Caco-2 (cell line): ENCODE measurements at regions of chr2 and their contacts with region 1.

Region 1: DNA sequence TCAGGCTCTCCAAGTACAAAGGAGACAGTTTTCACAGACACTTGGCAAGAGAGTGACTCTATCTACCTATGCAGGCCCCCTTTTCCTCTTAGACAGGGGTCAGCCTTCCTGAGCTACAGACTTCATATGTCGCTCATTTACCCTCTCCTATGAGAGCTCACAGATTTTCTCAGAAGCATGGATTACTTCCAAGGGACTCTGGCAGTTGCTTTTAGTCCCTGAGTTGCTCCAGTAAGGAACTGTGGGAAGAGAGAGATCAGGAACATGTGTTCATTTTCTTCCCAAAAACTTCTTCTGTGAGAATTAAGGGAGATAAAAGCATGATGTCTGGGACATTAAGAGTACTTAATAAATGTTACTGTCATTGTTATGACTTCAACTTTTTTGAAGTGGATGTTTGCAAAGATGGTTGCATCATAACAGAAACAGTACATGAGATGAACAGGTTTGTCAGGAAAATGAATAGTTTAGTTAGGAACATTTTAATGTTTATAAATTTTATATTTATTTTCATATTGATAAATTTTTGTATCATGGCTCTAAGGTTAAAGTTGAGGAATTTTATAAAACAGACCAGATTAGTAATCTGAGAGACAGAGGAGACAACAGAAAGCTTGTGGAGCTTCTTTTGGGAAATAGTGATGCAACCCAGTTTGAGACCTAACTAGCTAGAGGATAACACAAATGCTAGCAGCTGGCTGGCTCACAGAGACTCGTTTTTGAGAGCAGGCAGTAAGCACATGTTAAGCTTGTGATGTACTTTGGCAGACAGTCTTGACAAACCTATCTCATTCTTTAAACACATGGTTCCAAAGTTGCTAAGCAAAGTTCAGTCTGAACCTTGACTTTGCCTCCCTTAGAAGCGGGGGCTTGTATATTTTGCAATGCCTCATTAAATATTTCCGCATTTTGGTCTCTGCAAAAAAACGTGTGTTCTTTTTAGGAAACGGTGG is 21.7 kb upstream of the UGP2 start:
- DNase-seq: peak in 1 of 2 experiments; percentile 18
- H3K4me3 ChIP-seq: no peak overlapping the region
- H3K4me3 Mint-ChIP-seq: no peak overlapping the region
- H3K27ac Mint-ChIP-seq: no peak overlapping the region
- H3K4me1 ChIP-seq: peaks cover 8% of the 10 kb centered on the region; the same call in 1 of the 2 replicates
- H3K4me1 Mint-ChIP-seq: peaks cover under 1% of the 10 kb centered on the region
- H3K27me3 ChIP-seq: no peaks in the 10 kb centered on the region
- H3K27me3 Mint-ChIP-seq: no peaks in the 10 kb centered on the region
- CTCF ChIP-seq: no peak

Region 2: DNA sequence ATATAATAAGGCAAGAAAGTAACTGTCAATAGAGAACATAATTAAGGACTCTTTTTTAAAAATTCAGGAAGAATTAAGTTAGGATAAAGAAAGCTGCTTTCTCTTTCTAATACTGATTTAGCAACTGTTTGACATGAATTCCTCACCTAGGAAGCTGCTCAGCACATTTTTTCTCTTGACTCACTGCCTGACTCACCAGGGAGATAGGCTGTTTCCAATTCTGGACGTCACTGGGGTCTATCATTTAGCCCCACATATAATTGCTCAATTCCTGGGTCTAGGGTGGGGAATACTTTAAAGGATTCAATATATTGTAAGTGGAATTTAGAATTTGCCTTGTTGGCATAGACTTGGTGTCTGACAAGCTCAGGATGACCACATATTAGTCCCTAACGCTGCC is 29.1 kb before region 1 on chr2:
- CTCF ChIA-PET with region 1: no interaction called
- POLR2A ChIA-PET with region 1: no interaction called
- intact Hi-C with region 1: loop called (anchors 2 kb)
- DNase-seq: no peak
- H3K4me3 ChIP-seq: no peak overlapping the region
- H3K4me3 Mint-ChIP-seq: no peak overlapping the region
- H3K27ac Mint-ChIP-seq: no peak overlapping the region
- H3K4me1 ChIP-seq: no peaks in the 10 kb centered on the region; the same call in 1 of the 2 replicates
- H3K4me1 Mint-ChIP-seq: peaks cover 8% of the 10 kb centered on the region
- H3K27me3 ChIP-seq: no peaks in the 10 kb centered on the region
- H3K27me3 Mint-ChIP-seq: no peaks in the 10 kb centered on the region
- CTCF ChIP-seq: no peak